ENCODE measurements at regions of chr2 and their contacts with region 1.

Region 1: DNA sequence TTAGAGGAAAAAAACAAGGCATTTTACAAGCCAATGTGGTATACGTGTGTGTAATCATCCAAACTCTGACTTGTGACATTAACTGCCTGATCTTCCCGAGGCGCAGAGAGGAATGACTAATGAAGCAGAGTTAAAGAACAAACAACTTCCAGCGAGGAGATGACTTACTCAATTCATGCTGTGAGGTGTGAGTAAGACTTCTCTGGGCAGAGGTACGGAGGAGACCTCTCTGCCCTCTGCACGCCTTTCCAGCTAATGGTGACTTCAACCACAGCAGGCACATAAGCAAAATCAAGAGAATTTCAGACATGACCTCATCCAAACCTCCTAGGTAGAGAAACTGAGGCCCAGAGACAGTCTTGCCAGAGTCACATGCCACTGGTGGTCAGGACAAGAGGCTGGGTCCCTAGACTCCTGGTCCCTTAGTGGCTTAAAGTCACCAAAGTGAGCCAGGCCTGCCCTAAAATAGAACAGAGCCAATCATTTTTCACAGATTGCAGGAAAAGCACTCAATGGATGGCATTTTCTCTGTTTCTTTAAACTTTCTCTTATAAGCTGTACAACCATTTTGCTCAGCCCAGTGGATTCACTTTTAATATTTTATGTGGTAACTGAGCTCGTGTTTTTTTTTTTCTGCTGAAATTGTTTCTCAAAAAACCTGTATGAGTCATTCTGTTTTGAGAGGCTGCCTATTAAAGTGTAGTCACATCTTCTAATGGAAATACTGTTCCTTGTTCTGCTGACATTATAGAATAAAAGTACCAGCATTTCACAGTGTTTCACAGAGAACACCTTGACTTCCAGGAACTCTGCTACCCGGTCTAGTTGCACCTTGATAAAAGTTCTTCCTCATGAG is 29.4 kb downstream of the STEAP3 start:
- DNase-seq: peak; percentile 96
- H3K4me3 Mint-ChIP-seq: peak overlapping the region; percentile 38
- H3K27ac Mint-ChIP-seq: peak overlapping the region; percentile 96
- H3K4me1 Mint-ChIP-seq: peaks cover 41% of the 10 kb centered on the region
- H3K27me3 Mint-ChIP-seq: no peaks in the 10 kb centered on the region
- CTCF ChIP-seq: no peak

Region 2: DNA sequence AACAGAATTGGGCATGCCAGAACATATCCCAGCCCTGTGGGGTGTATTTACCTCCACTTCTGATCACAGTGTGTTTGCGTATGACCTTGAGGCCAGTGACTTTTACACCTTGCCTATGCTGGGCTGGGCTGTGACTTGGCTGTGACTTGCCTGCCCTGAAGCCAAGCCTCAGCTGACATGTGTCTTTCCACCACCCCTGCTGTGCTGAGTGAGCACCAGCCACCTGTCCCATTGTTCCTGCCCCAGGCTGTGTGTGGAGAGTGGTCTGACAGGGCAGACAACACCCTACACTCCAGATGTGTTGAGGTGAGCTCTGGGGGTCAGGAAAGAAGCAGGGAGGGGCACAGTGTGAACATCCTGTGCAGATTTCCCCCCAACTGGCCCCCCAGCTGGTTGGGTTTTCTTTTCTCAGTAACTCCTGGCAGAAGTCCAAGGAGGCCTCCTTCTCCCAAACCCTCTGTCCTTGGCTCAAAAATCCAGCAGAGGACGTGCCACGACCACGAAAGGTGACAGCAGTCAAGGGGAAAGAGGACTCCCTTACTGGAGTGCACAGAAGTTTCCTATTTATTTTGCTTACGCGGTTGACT is 34.5 kb before region 1 on chr2:
- CTCF ChIA-PET with region 1: interaction called, 7 read pairs
- POLR2A ChIA-PET with region 1: interaction called, 10 read pairs
- intact Hi-C with region 1: no loop called
- DNase-seq: peak; percentile 87
- H3K4me3 Mint-ChIP-seq: peak overlapping the region; percentile 21
- H3K27ac Mint-ChIP-seq: peak overlapping the region; percentile 91
- H3K4me1 Mint-ChIP-seq: peaks cover 33% of the 10 kb centered on the region
- H3K27me3 Mint-ChIP-seq: no peaks in the 10 kb centered on the region
- CTCF ChIP-seq: peak; percentile 54

Region 3: DNA sequence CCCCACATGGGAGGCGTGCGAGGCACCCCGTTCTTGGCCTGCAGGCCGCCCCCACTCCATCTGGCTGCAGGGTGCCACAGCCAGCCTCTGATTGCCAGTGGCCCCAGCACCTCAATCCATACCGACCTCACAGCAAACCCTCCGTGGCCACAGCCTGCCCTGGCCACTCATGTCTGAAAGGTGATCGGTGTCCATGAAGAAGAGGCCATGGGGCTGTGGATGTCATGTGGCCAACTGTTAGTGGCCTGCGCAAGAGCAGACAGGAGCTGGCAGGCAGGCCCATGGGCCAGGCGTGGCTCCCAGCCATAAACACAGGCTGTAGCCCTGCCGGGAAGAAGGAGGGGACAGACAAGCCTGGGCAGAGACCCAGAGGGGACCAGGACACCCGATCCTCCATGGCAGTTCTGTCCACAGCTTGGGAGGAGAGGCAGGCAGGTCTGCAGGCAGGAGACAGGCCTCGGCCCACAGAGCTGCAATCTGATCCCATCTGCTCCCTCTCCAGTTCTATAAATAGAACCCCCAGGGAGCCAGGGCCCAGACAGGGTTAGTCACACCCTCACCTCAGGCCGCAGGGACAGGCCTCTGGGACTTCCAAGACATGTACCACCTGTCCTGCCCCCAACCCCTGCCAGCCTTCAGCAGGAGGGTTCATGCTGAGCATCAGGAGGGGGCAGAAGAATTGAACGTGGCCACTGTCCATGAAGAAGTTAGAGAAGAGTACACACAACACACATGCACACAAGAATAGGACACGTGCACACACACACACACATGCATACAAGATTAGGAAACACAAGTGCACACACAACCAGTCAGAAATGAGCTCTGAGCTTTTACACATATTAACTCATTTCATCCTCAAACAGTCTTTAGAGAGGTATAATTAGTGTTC is 12.5 kb before region 1 on chr2:
- CTCF ChIA-PET with region 1: interaction called, 6 read pairs
- POLR2A ChIA-PET with region 1: interaction called, 21 read pairs
- intact Hi-C with region 1: no loop called
- DNase-seq: peak; percentile 91
- H3K4me3 Mint-ChIP-seq: peak overlapping the region; percentile 27
- H3K27ac Mint-ChIP-seq: peak overlapping the region; percentile 82
- H3K4me1 Mint-ChIP-seq: peaks cover 14% of the 10 kb centered on the region
- H3K27me3 Mint-ChIP-seq: no peaks in the 10 kb centered on the region
- CTCF ChIP-seq: no peak

Measured in MCF 10A (cell line).